OCI-LY7 (cell line): ENCODE measurements at regions of chr11 and their contacts with region 1.

Region 1: GRCh38 chr11:124256076-124256475 is at the start of gene OR8G5:
- DNase-seq: no peak
- H3K4me3 ChIP-seq: no peak within 1 kb of the TSS
- H3K27ac ChIP-seq: no peak within 1 kb of the TSS
- H3K4me1 ChIP-seq: no peaks in the 10 kb centered on the region
- CTCF ChIP-seq: no peak
- total RNA-seq, gene OR8G5: not detected in 2 replicates

Region 2: DNA sequence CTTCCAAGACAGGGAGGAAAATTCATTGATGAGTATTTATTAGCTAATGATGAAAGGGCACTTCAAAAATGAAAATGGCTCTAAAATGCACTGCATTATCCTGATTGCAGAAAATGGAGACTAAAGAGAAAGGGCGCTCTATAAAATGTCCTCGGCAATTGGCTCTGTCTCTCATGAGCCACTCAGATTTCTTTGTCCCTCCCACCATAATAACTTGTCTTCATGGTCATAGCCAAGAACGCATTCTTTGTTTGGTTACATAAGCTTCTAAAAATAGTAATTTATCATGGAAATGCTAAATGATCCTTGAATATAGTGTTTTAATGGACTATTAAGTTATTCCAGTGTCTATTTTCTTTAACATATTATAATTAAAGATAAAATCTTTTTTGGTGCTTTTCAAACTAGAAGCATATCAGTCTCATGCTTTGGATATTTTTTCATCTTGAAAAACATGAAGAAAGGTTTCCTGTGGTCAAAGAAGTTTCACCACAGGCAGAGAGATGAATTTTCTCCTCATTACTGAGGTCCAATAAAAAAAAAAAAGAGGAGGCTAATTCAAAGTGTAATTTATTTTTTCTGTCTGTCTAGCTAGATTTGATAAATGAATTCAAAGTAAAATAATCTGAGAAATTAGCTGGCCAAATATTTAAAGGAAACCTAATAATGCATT is 1901.9 kb before region 1 on chr11:
- CTCF ChIA-PET with region 1: no interaction called
- POLR2A ChIA-PET with region 1: no interaction called
- intact Hi-C with region 1: loop called (anchors 10 kb)
- DNase-seq: no peak
- H3K4me3 ChIP-seq: no peak overlapping the region
- H3K27ac ChIP-seq: no peak overlapping the region
- H3K4me1 ChIP-seq: no peaks in the 10 kb centered on the region
- CTCF ChIP-seq: no peak